ENCODE measurements at regions of chr7 and their contacts with region 1.

Region 1: DNA sequence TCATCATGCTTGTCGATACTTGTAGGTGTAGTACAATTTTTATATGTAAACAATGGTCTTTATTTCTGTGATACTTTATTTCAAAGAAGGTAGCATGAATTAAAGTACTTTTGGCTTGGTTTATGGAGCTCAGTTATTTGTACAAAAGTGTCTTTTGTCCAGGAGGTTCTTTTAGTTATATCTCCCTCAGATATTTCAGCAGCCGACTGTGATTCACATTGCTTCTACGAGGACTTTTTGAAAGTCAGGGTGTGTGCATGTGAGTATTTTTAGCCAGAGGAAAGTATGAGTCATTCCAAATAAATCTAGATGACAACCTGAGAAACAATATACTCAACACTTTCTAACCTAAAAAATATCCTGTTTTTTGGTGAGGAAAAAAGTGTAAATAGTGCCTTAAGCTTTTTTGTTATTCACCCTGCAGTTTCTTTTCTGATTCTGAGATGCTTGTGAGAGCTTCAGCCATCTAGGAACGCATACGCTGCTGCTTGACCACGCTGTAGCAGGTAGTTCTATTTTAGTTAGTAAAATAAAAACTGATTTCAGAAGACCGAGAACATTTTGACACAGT is 595 bp upstream of the SUN1 start:
- DNase-seq: peak; percentile 23
- H3K4me3 Mint-ChIP-seq: peak overlapping the region; percentile 73
- H3K27ac Mint-ChIP-seq: peak overlapping the region; percentile 97
- H3K4me1 Mint-ChIP-seq: peaks cover 59% of the 10 kb centered on the region
- H3K27me3 Mint-ChIP-seq: no peaks in the 10 kb centered on the region

Region 2: GRCh38 chr7:794671-795329 is 36.9 kb before region 1 on chr7:
- CTCF ChIA-PET with region 1: no interaction called
- POLR2A ChIA-PET with region 1: no interaction called
- DNase-seq: no peak
- H3K4me3 Mint-ChIP-seq: no peak overlapping the region
- H3K27ac Mint-ChIP-seq: no peak overlapping the region
- H3K4me1 Mint-ChIP-seq: no peaks in the 10 kb centered on the region
- H3K27me3 Mint-ChIP-seq: no peaks in the 10 kb centered on the region

Region 3: DNA sequence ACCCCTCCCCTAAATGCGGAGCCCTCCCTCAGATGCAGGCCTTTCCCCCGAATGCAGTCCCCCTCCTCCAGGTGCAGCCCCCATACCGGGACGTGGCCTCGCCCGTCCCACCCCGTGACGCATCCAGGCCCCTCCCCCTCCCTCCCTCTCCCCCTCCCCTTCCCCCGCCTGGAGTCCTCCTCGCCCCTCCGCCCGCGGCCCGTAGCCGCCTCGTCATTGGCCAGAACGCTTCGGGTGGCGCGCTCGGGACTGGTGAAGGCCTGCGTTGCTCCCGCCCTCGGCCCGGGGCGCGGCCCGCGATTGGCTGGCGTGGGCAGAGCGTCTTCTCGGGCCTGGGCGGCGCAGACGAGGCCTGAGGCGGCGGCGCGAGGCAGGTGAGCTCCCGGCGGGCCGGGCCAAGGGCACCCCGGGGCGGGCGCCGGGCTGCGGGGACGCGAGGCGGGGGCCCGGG is 15.4 kb before region 1 on chr7:
- CTCF ChIA-PET with region 1: interaction called, 16 read pairs
- POLR2A ChIA-PET with region 1: interaction called, 41 read pairs
- DNase-seq: peak; percentile 97
- H3K4me3 Mint-ChIP-seq: peak overlapping the region; percentile 71
- H3K27ac Mint-ChIP-seq: no peak overlapping the region
- H3K4me1 Mint-ChIP-seq: peaks cover 54% of the 10 kb centered on the region
- H3K27me3 Mint-ChIP-seq: peaks cover 26% of the 10 kb centered on the region

Region 4: DNA sequence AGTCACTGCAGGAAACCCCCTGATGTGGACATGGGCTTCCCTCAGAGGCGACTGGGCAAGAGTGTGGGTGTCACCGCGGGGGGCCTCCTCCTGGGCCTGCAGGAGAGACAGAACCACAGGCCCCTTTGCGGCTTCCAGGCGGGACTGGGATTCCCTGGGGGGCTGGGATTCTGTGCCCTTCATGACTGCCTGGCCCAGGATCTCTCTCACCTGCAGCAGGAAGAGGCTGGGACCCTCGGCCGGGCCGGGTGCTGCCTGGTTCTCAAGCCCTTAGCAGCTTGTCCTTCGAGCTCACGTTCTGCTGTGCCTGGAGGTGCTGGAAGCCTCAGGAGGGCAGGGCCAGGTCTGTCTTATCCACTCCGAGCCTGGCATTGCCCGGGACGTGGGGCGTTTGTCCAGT is 12.4 kb after region 1 on chr7:
- CTCF ChIA-PET with region 1: no interaction called
- POLR2A ChIA-PET with region 1: interaction called, 14 read pairs
- DNase-seq: no peak
- H3K4me3 Mint-ChIP-seq: no peak overlapping the region
- H3K27ac Mint-ChIP-seq: no peak overlapping the region
- H3K4me1 Mint-ChIP-seq: no peaks in the 10 kb centered on the region
- H3K27me3 Mint-ChIP-seq: no peaks in the 10 kb centered on the region